ENCODE measurements at regions of chrX and their contacts with region 1.

Region 1: GRCh38 chrX:22135994-22136684 is 104.0 kb downstream of the PHEX start:
- DNase-seq: peak; percentile 79
- H3K4me3 ChIP-seq: peak overlapping the region in 1 of 3 experiments; percentile 15
- H3K27ac ChIP-seq: peak overlapping the region; percentile 94
- H3K4me1 ChIP-seq: peaks cover 37% of the 10 kb centered on the region
- H3K27me3 ChIP-seq: no peaks in the 10 kb centered on the region
- CTCF ChIP-seq: peak; percentile 49 to 72

Region 2: DNA sequence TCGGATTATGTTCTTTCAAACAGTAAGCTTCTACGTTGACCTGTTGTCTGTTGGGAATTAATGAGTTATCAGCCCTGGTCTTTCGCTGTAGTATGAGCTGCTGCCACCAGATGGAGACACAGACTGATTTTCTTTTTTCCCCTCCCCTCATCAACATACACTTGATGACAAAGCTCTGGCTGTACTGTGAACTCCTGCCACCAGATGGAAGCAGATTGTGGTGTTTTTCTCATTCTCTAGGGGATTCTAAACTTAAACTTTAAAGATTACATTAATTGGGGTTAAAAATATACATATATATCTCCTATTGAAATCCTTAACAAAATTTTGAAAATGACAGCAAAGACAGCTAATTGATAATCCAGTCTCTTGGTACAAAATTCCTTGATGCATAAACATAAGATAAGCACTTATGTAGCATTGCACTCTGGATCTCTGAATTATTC is 150.8 kb before region 1 on chrX:
- CTCF ChIA-PET with region 1: interaction called, 10 read pairs
- dilution Hi-C with region 1: loop called (anchors 25 kb)
- in situ Hi-C with region 1: no loop called
- intact Hi-C with region 1: loop called (anchors 1 kb)
- DNase-seq: peak; percentile 69
- H3K4me3 ChIP-seq: no peak overlapping the region
- H3K27ac ChIP-seq: no peak overlapping the region
- H3K4me1 ChIP-seq: peaks cover 4% of the 10 kb centered on the region
- H3K27me3 ChIP-seq: no peaks in the 10 kb centered on the region
- CTCF ChIP-seq: peak; percentile 91 to 99

Region 3: GRCh38 chrX:22081475-22082092 is 54.6 kb before region 1 on chrX:
- CTCF ChIA-PET with region 1: interaction called, 10 read pairs
- dilution Hi-C with region 1: no loop called
- in situ Hi-C with region 1: no loop called
- intact Hi-C with region 1: loop called (anchors 1 kb)
- DNase-seq: peak; percentile 43
- H3K4me3 ChIP-seq: no peak overlapping the region
- H3K27ac ChIP-seq: no peak overlapping the region
- H3K4me1 ChIP-seq: no peaks in the 10 kb centered on the region
- H3K27me3 ChIP-seq: no peaks in the 10 kb centered on the region
- CTCF ChIP-seq: peak; percentile 87 to 94

Region 4: GRCh38 chrX:22192417-22193060 is 56.4 kb after region 1 on chrX:
- CTCF ChIA-PET with region 1: no interaction called
- dilution Hi-C with region 1: no loop called
- in situ Hi-C with region 1: no loop called
- intact Hi-C with region 1: loop called (anchors 1 kb)
- DNase-seq: peak; percentile 41
- H3K4me3 ChIP-seq: no peak overlapping the region
- H3K27ac ChIP-seq: no peak overlapping the region
- H3K4me1 ChIP-seq: peaks cover 2% of the 10 kb centered on the region
- H3K27me3 ChIP-seq: no peaks in the 10 kb centered on the region
- CTCF ChIP-seq: peak; percentile 70 to 82

Region 5: GRCh38 chrX:22399437-22400192 is 263.5 kb after region 1 on chrX:
- CTCF ChIA-PET with region 1: no interaction called
- dilution Hi-C with region 1: no loop called
- in situ Hi-C with region 1: no loop called
- intact Hi-C with region 1: loop called (anchors 1 kb)
- DNase-seq: peak; percentile 82
- H3K4me3 ChIP-seq: no peak overlapping the region
- H3K27ac ChIP-seq: peak overlapping the region; percentile 78
- H3K4me1 ChIP-seq: peaks cover 10% of the 10 kb centered on the region
- H3K27me3 ChIP-seq: no peaks in the 10 kb centered on the region
- CTCF ChIP-seq: no peak

Region 6: DNA sequence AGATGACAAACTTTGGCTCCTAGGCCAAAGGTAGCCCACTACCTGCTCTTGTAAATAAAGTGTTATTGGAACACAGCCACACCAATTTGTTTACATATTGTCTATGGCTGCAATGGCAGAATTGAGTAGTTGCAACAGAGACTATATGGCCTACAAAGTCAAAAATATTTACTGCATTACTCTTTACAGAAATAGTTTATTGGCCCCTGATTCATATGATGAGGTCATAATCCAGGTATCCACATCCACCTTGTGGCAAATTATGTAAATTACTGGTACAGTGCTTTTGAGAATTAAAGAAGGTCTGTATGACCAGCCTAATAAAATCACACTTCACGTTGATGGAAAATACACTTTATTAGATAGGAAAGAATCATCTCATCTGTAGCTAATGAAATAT is 526.6 kb after region 1 on chrX:
- CTCF ChIA-PET with region 1: interaction called, 6 read pairs
- dilution Hi-C with region 1: no loop called
- in situ Hi-C with region 1: no loop called
- intact Hi-C with region 1: loop called (anchors 2 kb)
- DNase-seq: peak; percentile 42
- H3K4me3 ChIP-seq: no peak overlapping the region
- H3K27ac ChIP-seq: no peak overlapping the region
- H3K4me1 ChIP-seq: peaks cover 7% of the 10 kb centered on the region
- H3K27me3 ChIP-seq: no peaks in the 10 kb centered on the region
- CTCF ChIP-seq: peak; percentile 30 to 33

Region 7: GRCh38 chrX:23554304-23554703 is 1418.2 kb after region 1 on chrX:
- CTCF ChIA-PET with region 1: no interaction called
- dilution Hi-C with region 1: no loop called
- in situ Hi-C with region 1: no loop called
- intact Hi-C with region 1: loop called (anchors 2 kb)
- DNase-seq: peak; percentile 20
- H3K4me3 ChIP-seq: no peak overlapping the region
- H3K27ac ChIP-seq: no peak overlapping the region
- H3K4me1 ChIP-seq: no peaks in the 10 kb centered on the region
- H3K27me3 ChIP-seq: peaks cover 4% of the 10 kb centered on the region
- CTCF ChIP-seq: peak; percentile 68 to 72

Measured in mammary epithelial cell (primary cell).